B cell (primary cell): ENCODE measurements at regions of chr14 and their contacts with region 1.

Region 1: DNA sequence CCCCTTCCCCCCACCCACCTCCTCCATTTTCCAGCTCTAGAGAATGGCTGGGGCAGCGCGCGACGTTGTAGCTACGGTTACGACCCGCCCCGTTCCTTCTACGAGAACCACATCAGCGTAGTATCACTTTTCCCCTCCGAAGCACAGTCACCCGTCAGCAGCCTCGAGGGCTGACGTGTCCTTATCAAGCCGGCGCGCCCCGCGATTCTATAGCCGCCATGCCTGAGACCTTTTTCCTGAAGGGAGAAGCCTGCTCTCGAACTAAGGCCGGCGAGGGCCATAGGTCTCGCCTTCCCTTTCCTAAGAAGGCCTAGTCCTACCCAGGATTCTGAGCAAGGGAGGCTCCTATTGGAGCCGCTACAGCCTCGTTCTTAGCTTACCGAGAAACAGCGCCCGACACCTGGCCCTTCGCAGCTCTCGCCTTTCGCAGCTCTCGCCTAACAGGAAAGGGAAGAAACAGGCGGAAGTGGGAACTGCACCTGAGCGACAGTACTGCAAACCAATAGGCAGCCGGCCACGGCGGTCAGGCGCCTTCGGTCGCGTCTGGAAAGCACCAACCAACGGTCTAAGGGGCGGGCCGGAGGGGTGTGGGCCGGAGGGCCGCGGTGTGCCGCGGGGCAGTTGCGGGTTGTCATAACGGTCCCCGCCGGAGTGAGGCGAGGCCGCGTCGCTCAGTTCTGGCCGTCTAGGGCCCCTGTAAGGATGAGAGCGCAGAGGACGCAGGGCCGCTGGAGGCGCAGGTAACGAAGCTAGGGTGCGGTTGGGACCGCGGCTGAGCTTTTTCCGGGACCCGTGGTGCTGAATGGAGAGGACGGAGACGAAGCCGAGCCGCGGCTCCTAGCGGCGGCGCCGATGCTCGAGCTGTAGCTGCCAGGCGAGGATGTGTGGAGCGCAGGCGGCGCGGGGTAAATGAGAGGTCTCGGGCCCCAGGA is at the starts of genes MGAT2 and RPL36AL:
- DNase-seq: peak; percentile 98
- ATAC-seq: peak; percentile 93
- H3K4me3 ChIP-seq: peak within 1 kb of the TSS; percentile 90 to 99 (median 97)
- H3K4me3 Mint-ChIP-seq: peak within 1 kb of the TSS; percentile 99
- H3K27ac ChIP-seq: peak within 1 kb of the TSS; percentile 96 to 98
- H3K27ac Mint-ChIP-seq: peak within 1 kb of the TSS; percentile 99
- H3K4me1 ChIP-seq: peaks cover 31 to 44% of the 10 kb centered on the region in 2 donors
- H3K4me1 Mint-ChIP-seq: peaks cover 55% of the 10 kb centered on the region
- H3K27me3 ChIP-seq: no peaks in the 10 kb centered on the region
- H3K27me3 Mint-ChIP-seq: no peaks in the 10 kb centered on the region
- CTCF ChIP-seq: peak; percentile 43
- total RNA-seq, gene MGAT2: 36.2 and 39.9 TPM in 2 replicates
- total RNA-seq, gene RPL36AL: 151 and 171 TPM in 2 replicates

Region 2: DNA sequence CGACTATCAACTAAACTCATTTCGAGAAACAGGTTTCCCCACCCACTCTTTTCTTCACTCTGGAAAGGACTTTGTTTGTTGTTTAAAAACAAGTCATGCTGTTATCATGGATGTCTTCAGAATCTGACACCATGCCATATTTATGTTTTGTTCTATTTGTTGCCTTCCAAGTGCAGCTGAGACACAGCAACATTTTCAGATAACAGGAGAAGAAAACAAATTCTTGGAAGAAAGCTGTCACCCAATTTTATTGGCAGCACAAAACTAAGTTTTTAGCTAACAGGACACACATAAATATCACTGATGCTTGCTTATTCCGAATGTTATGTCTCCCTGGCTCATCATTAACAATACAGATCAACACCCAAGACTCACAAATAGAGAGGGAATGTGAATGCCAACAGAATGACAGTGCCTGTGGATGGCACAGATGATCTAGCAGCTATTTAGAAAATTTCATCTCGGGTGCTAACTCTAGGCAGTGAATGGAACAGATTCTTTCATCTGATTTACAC is 182.1 kb before region 1 on chr14:
- CTCF ChIA-PET with region 1: no interaction called
- POLR2A ChIA-PET with region 1: no interaction called
- intact Hi-C with region 1: no loop called
- DNase-seq: no peak
- ATAC-seq: no peak
- H3K4me3 ChIP-seq: no peak overlapping the region
- H3K4me3 Mint-ChIP-seq: no peak overlapping the region
- H3K27ac ChIP-seq: no peak overlapping the region
- H3K27ac Mint-ChIP-seq: no peak overlapping the region
- H3K4me1 ChIP-seq: no peaks in the 10 kb centered on the region
- H3K4me1 Mint-ChIP-seq: no peaks in the 10 kb centered on the region
- H3K27me3 ChIP-seq: no peaks in the 10 kb centered on the region
- H3K27me3 Mint-ChIP-seq: peaks cover 28% of the 10 kb centered on the region
- CTCF ChIP-seq: no peak

Region 3: GRCh38 chr14:49585803-49586672 is 34.4 kb before region 1 on chr14 and contains the start of gene RPS29:
- CTCF ChIA-PET with region 1: interaction called, 57 read pairs
- POLR2A ChIA-PET with region 1: interaction called, 53 read pairs
- intact Hi-C with region 1: loop called (anchors 1 kb)
- DNase-seq: peak; percentile 100
- ATAC-seq: peak; percentile 86
- H3K4me3 ChIP-seq: peak within 1 kb of the TSS; percentile 70 to 100 (median 88)
- H3K4me3 Mint-ChIP-seq: peak within 1 kb of the TSS; percentile 88
- H3K27ac ChIP-seq: peak within 1 kb of the TSS; percentile 88 to 95
- H3K27ac Mint-ChIP-seq: peak within 1 kb of the TSS; percentile 100
- H3K4me1 ChIP-seq: peaks cover 17 to 24% of the 10 kb centered on the region in 2 donors
- H3K4me1 Mint-ChIP-seq: peaks cover 46% of the 10 kb centered on the region
- H3K27me3 ChIP-seq: no peaks in the 10 kb centered on the region
- H3K27me3 Mint-ChIP-seq: no peaks in the 10 kb centered on the region
- CTCF ChIP-seq: no peak
- total RNA-seq, gene RPS29: 2,497 and 2,873 TPM in 2 replicates

Region 4: GRCh38 chr14:49598485-49599300 is 21.8 kb before region 1 on chr14 and contains the start of gene LRR1:
- CTCF ChIA-PET with region 1: interaction called, 23 read pairs
- POLR2A ChIA-PET with region 1: interaction called, 69 read pairs
- intact Hi-C with region 1: loop called (anchors 1 kb)
- DNase-seq: peak; percentile 95
- ATAC-seq: peak; percentile 73
- H3K4me3 ChIP-seq: peak within 1 kb of the TSS; percentile 75 to 94 (median 80)
- H3K4me3 Mint-ChIP-seq: peak within 1 kb of the TSS; percentile 99
- H3K27ac ChIP-seq: peak within 1 kb of the TSS; percentile 92 to 97
- H3K27ac Mint-ChIP-seq: peak within 1 kb of the TSS; percentile 98
- H3K4me1 ChIP-seq: peaks cover 33 to 42% of the 10 kb centered on the region in 2 donors
- H3K4me1 Mint-ChIP-seq: peaks cover 55% of the 10 kb centered on the region
- H3K27me3 ChIP-seq: no peaks in the 10 kb centered on the region
- H3K27me3 Mint-ChIP-seq: no peaks in the 10 kb centered on the region
- CTCF ChIP-seq: no peak
- total RNA-seq, gene LRR1: 10.3 and 13.0 TPM in 2 replicates

Region 5: GRCh38 chr14:49852301-49853157 is 232.1 kb after region 1 on chr14 and contains the start of gene NEMF:
- CTCF ChIA-PET with region 1: interaction called, 10 read pairs
- POLR2A ChIA-PET with region 1: interaction called, 4 read pairs
- intact Hi-C with region 1: no loop called
- DNase-seq: peak; percentile 94
- ATAC-seq: peak; percentile 84
- H3K4me3 ChIP-seq: peak within 1 kb of the TSS; percentile 78 to 99 (median 99)
- H3K4me3 Mint-ChIP-seq: peak within 1 kb of the TSS; percentile 98
- H3K27ac ChIP-seq: peak within 1 kb of the TSS; percentile 72 to 88
- H3K27ac Mint-ChIP-seq: peak within 1 kb of the TSS; percentile 98
- H3K4me1 ChIP-seq: peaks cover 20 to 31% of the 10 kb centered on the region in 2 donors
- H3K4me1 Mint-ChIP-seq: peaks cover 44% of the 10 kb centered on the region
- H3K27me3 ChIP-seq: no peaks in the 10 kb centered on the region
- H3K27me3 Mint-ChIP-seq: no peaks in the 10 kb centered on the region
- CTCF ChIP-seq: peak; percentile 86
- total RNA-seq, gene NEMF: 127 and 146 TPM in 2 replicates